Activated CD4-positive, alpha-beta T cell treated with anti-CD3 and anti-CD28 coated beads, Interleukin-2, amount 10 ng/mL, durations not matched to agents 7 days and 5 days (primary cell): ENCODE measurements at regions of chr19 and their contacts with region 1.

Region 1: GRCh38 chr19:36850559-36851442 is at the start of gene ZNF345:
- DNase-seq: peak; percentile 93
- H3K4me3 Mint-ChIP-seq: no peak within 1 kb of the TSS
- H3K27ac Mint-ChIP-seq: no peak within 1 kb of the TSS
- H3K4me1 Mint-ChIP-seq: peaks cover 8% of the 10 kb centered on the region
- H3K27me3 Mint-ChIP-seq: no peaks in the 10 kb centered on the region
- total RNA-seq, gene ZNF345: 6.0 to 6.7 TPM

Region 2: GRCh38 chr19:36528194-36528920 is 322.4 kb before region 1 on chr19 and contains the start of gene ZNF260:
- CTCF ChIA-PET with region 1: no interaction called
- POLR2A ChIA-PET with region 1: no interaction called
- DNase-seq: peak; percentile 94
- H3K4me3 Mint-ChIP-seq: peak within 1 kb of the TSS; percentile 98
- H3K27ac Mint-ChIP-seq: peak within 1 kb of the TSS; percentile 98
- H3K4me1 Mint-ChIP-seq: peaks cover 23% of the 10 kb centered on the region
- H3K27me3 Mint-ChIP-seq: no peaks in the 10 kb centered on the region
- total RNA-seq, gene ZNF260: 10.6 to 13.7 TPM

Region 3: DNA sequence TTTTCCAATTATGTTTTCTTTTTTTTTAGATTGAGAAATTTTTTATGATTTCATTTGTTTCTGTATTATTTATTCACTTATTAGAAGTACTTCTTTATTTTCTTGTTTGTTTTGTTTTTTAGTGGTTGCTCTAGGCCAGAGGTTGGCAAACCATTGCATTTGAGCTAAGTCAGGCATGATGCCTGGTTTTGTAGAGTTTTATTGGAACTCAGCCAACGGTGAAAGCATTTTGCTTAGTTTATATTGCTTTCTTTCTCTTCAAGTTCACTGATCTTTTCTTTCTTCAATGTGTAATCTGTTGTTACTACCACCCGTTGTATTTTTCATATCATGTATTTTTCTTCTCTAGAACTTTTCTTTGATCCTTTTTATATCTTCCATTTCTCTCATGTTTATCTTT is 143.7 kb before region 1 on chr19:
- CTCF ChIA-PET with region 1: no interaction called
- POLR2A ChIA-PET with region 1: no interaction called
- DNase-seq: no peak
- H3K4me3 Mint-ChIP-seq: no peak overlapping the region
- H3K27ac Mint-ChIP-seq: no peak overlapping the region
- H3K4me1 Mint-ChIP-seq: no peaks in the 10 kb centered on the region
- H3K27me3 Mint-ChIP-seq: no peaks in the 10 kb centered on the region

Region 4: GRCh38 chr19:36837906-36838783 is 12.7 kb before region 1 on chr19 and contains the start of gene ZNF790:
- CTCF ChIA-PET with region 1: interaction called, 27 read pairs
- POLR2A ChIA-PET with region 1: interaction called, 10 read pairs
- DNase-seq: peak; percentile 86
- H3K4me3 Mint-ChIP-seq: no peak within 1 kb of the TSS
- H3K27ac Mint-ChIP-seq: no peak within 1 kb of the TSS
- H3K4me1 Mint-ChIP-seq: peaks cover 4% of the 10 kb centered on the region
- H3K27me3 Mint-ChIP-seq: no peaks in the 10 kb centered on the region
- total RNA-seq, gene ZNF790: 8.0 to 9.1 TPM

Region 5: GRCh38 chr19:36973021-36973843 is 122.4 kb after region 1 on chr19:
- CTCF ChIA-PET with region 1: interaction called, 11 read pairs
- POLR2A ChIA-PET with region 1: no interaction called
- DNase-seq: peak; percentile 83
- H3K4me3 Mint-ChIP-seq: peak overlapping the region; percentile 78
- H3K27ac Mint-ChIP-seq: peak overlapping the region; percentile 92
- H3K4me1 Mint-ChIP-seq: peaks cover 11% of the 10 kb centered on the region
- H3K27me3 Mint-ChIP-seq: no peaks in the 10 kb centered on the region